Psoas muscle (tissue), 8 donors: ENCODE measurements at regions of chr5 and their contacts with region 1.

Region 1: GRCh38 chr5:88729084-88729828 is 153.7 kb downstream of the MEF2C start:
- DNase-seq: peak in 1 of 2 donors; percentile 24
- ATAC-seq: peak; percentile 66 to 86 (median 79)
- H3K4me3 ChIP-seq: no peak overlapping the region
- H3K27ac ChIP-seq: no peak overlapping the region
- H3K4me1 ChIP-seq: peaks cover 41% of the 10 kb centered on the region
- H3K27me3 ChIP-seq: no peaks in the 10 kb centered on the region
- CTCF ChIP-seq: peak; percentile 90

Region 2: GRCh38 chr5:88883059-88883835 is 154.0 kb after region 1 on chr5 and contains the start of gene MEF2C:
- intact Hi-C with region 1: loop called (anchors 1 to 5 kb)
- DNase-seq: peak; percentile 74 to 88
- ATAC-seq: peak; percentile 80 to 86 (median 84)
- H3K4me3 ChIP-seq: peak within 1 kb of the TSS; percentile 76
- H3K27ac ChIP-seq: peak within 1 kb of the TSS; percentile 88
- H3K4me1 ChIP-seq: peaks cover 56% of the 10 kb centered on the region
- H3K27me3 ChIP-seq: no peaks in the 10 kb centered on the region
- CTCF ChIP-seq: no peak
- total RNA-seq, gene MEF2C: 148 to 530 (median 257) TPM

Region 3: DNA sequence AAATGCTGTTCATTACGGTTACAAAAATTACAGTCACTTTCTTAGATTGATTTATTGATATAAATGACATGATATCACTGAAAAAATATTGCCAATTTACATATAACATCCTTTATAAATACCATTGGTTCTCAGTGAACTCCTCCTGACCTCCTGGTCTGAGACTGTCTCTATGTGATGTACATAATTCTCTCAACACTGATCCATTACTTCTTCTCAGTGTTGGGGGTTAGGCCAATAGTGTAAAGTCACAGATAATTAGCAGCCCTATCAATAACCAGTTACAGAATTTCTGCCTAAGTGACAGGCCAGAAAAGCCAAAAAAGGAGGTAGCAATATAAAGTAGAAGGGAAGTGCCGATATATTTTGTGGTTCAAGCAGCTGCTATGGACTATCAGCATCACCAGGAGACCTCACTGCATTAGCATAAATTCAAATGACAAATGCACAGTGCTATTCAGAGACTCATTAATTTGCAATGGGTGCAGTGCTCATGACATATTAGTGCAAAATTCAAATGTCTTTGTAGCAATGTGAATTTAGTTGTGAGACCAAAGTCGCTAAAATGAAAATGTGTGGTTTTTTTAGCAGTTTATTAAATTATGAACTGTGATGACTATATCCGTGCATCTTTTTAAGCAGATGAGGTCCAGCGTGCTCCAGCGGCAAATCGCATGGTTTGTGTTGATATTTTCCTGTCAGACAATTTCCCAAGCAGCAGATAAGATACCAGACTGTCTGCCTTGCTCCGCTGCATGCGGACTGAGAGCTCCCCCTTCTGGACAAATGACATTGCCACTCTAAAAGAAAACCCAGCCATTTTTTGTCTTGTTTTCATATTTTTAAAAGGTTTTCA is 1535.7 kb after region 1 on chr5:
- intact Hi-C with region 1: loop called (anchors 5 to 10 kb)
- DNase-seq: peak; percentile 31 to 64
- ATAC-seq: peak in 2 of 4 donors; percentile 71 to 81
- H3K4me3 ChIP-seq: no peak overlapping the region
- H3K27ac ChIP-seq: no peak overlapping the region
- H3K4me1 ChIP-seq: no peaks in the 10 kb centered on the region
- H3K27me3 ChIP-seq: no peaks in the 10 kb centered on the region
- CTCF ChIP-seq: peak; percentile 91